Ovary (tissue), 10 donors: ENCODE measurements at regions of chr13 and their contacts with region 1.

Region 1: DNA sequence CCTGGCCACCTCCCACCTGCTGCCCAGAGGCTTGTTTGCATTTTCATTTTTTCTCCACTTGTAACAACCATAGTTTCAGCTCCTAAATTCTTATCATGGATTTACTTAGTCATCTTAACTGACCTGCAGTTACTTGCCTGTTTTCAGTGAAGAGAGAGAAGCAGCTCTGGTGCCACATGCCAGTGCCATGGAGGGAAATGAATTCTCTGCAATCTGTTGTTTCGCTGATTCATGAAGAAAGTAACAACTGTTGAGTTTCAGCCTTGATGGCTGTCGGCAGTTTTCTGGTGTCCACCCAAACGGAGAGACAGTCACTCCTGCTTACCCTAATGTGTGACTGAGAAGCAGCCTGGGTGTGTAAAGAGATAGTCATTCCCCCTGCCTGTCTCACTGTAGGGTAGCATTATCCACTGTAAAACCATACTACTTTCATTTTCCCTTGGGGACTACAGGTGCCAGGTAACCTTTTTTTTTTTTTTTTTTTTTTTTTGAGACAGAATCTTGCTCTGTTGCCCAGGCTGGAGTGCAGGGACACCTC is 116.1 kb downstream of the DNAJC3 start:
- DNase-seq: no peak
- H3K4me3 ChIP-seq: no peak overlapping the region
- H3K27ac ChIP-seq: no peak overlapping the region
- H3K4me1 ChIP-seq: no peaks in the 10 kb centered on the region
- H3K27me3 ChIP-seq: no peaks in the 10 kb centered on the region
- CTCF ChIP-seq: no peak
- EP300 ChIP-seq: no peak
- POLR2A ChIP-seq: no peak

Region 2: DNA sequence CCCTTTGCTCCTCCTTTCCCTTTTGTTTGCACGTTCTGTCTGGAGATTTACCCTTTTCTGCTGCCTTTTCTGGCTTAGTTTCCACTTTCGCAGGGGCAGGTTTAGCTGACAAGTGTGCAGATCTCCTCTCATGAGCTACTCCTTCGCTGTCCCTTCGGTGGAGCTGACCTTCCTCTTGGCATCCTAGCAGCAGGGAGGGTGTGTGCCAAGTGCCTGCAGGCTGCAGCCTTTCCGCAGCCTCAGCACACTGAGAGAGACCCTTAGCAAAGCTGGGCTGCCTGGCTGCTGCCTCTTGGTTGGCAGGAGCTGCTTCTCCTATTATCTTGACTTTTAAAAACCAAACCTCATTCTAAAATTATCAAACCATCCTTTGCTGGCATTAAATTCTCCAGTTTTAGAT is 16.3 kb after region 1 on chr13:
- intact Hi-C with region 1: no loop called
- DNase-seq: no peak
- H3K4me3 ChIP-seq: no peak overlapping the region
- H3K27ac ChIP-seq: no peak overlapping the region
- H3K4me1 ChIP-seq: no peaks in the 10 kb centered on the region
- H3K27me3 ChIP-seq: no peaks in the 10 kb centered on the region
- CTCF ChIP-seq: no peak
- EP300 ChIP-seq: no peak
- POLR2A ChIP-seq: no peak

Region 3: DNA sequence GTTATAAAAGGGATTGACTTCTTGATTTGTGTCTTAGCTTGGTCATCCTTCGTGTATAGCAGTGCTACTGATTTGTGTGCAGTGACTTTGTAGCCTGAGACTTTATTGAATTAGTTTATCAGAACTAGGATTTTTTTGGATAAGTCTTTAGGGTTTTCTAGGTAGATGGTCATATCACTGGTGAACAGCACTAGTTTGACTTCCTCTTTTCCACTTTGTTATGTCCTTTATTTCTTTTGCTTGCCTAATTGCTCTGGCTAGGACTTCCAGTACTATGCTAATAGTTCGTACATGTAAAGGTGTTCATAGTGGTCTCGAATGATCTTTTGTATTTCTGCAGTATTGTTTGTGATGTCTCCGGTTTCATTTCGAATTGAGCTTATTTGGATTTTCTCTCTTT is 29.2 kb after region 1 on chr13:
- intact Hi-C with region 1: loop called in 1 of 4 experiments (anchors 2 kb)
- DNase-seq: no peak
- H3K4me3 ChIP-seq: no peak overlapping the region
- H3K27ac ChIP-seq: no peak overlapping the region
- H3K4me1 ChIP-seq: no peaks in the 10 kb centered on the region
- H3K27me3 ChIP-seq: no peaks in the 10 kb centered on the region
- CTCF ChIP-seq: no peak
- EP300 ChIP-seq: no peak
- POLR2A ChIP-seq: no peak

Region 4: GRCh38 chr13:96342852-96343465 is 549.9 kb after region 1 on chr13:
- intact Hi-C with region 1: no loop called
- DNase-seq: no peak
- H3K4me3 ChIP-seq: no peak overlapping the region
- H3K27ac ChIP-seq: no peak overlapping the region
- H3K4me1 ChIP-seq: no peaks in the 10 kb centered on the region
- H3K27me3 ChIP-seq: no peaks in the 10 kb centered on the region
- CTCF ChIP-seq: no peak
- EP300 ChIP-seq: no peak
- POLR2A ChIP-seq: no peak